A549 (cell line): ENCODE measurements at regions of chr3 and their contacts with region 1.

Region 1: DNA sequence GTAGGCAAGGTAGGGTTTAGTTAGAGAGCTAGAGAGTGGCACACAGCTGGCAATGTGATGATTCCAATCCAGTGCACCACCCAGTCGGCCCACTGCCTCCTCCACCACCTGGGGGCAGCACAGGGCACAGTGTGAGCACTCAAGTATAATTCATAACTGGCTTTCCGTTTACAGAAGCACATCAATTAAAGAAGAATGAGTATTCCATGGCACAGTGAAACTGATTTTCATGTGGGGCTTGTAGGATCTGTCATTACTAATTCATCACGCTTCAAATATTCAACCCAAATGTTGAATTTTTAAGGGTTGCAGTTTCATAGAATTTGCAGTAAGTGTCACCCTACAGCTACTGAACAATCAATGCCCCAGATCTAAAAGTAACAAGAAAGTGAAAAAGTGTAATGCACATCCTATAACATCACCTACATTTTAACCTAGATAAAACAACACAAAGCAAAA is 149.9 kb downstream of the IGSF11 start:
- DNase-seq: peak; percentile 40 to 63
- ATAC-seq: peak; percentile 88 to 92
- H3K4me3 ChIP-seq: no peak overlapping the region
- H3K27ac ChIP-seq: no peak overlapping the region
- H3K4me1 ChIP-seq: peaks cover 4% of the 10 kb centered on the region; the same call in 1 of the 3 replicates
- CTCF ChIP-seq: peak; percentile 100
- EP300 ChIP-seq: no peak
- POLR2A ChIP-seq: no peak
- RAD21 ChIP-seq: peak; percentile 69 to 94

Region 2: DNA sequence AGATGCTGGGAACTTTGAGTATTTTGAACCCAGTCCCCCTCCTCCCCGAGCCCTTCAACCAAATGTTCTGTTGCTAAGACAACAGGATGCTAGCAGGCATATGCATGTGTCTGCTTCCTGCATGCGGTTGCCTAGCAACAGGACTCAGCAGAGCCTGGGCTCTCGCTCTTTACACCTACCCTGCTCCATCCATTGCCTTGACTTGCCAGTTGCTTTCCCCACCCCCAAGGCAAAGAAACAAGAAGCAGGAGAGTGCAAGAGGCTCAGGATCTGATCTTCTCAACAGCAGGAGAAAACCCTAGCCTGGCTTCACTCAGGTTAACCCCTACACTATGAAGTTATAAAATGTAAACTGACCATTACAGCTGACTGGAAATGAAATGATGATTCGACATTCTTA is 243.2 kb before region 1 on chr3:
- CTCF ChIA-PET with region 1: no interaction called
- POLR2A ChIA-PET with region 1: no interaction called
- DNase-seq: peak in 1 of 2 experiments; percentile 1
- ATAC-seq: no peak
- H3K4me3 ChIP-seq: no peak overlapping the region
- H3K27ac ChIP-seq: no peak overlapping the region
- H3K4me1 ChIP-seq: no peaks in the 10 kb centered on the region
- CTCF ChIP-seq: no peak
- EP300 ChIP-seq: no peak
- POLR2A ChIP-seq: no peak
- RAD21 ChIP-seq: no peak

Region 3: GRCh38 chr3:118907909-118908308 is 23.1 kb after region 1 on chr3:
- CTCF ChIA-PET with region 1: interaction called, 18 read pairs
- POLR2A ChIA-PET with region 1: no interaction called
- DNase-seq: no peak
- ATAC-seq: no peak
- H3K4me3 ChIP-seq: no peak overlapping the region
- H3K27ac ChIP-seq: no peak overlapping the region
- H3K4me1 ChIP-seq: peaks cover 9% of the 10 kb centered on the region; the same call in 2 of the 3 replicates
- CTCF ChIP-seq: no peak
- EP300 ChIP-seq: no peak
- POLR2A ChIP-seq: no peak
- RAD21 ChIP-seq: no peak

Region 4: GRCh38 chr3:119042164-119042563 is 157.4 kb after region 1 on chr3:
- CTCF ChIA-PET with region 1: interaction called, 207 read pairs
- POLR2A ChIA-PET with region 1: no interaction called
- DNase-seq: no peak
- ATAC-seq: no peak
- H3K4me3 ChIP-seq: no peak overlapping the region
- H3K27ac ChIP-seq: no peak overlapping the region
- H3K4me1 ChIP-seq: no peaks in the 10 kb centered on the region
- CTCF ChIP-seq: no peak
- EP300 ChIP-seq: no peak
- POLR2A ChIP-seq: no peak
- RAD21 ChIP-seq: no peak

Region 5: DNA sequence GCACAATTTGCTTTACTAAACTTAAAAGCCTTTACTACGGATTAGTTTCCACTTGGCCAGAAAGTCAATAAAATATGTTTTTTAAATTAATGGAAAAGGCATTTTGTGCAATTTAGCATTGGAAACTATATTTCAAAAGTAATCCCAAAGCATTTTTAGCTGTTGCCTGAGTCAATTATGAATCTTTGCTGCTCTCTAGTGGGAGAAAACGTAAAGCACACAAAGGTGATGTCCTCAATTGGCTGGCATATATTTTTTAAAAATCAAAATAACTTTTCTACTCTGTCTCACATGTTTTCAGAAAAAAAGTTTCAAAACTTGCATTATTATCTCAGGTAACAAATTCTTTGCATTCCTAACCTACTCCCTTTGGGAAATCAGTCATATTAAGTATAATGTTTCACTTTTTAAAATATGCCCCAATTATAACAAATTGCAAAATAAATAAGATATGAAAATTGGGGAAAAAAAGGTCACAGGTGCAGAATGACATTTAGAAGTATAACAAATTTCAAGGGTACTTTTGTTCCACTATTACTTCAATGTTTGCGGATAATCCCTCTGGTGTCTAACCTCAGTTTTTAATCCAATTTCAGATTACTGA is 213.9 kb after region 1 on chr3:
- CTCF ChIA-PET with region 1: interaction called, 321 read pairs
- POLR2A ChIA-PET with region 1: interaction called, 9 read pairs
- DNase-seq: peak; percentile 31 to 53
- ATAC-seq: peak in 1 of 2 experiments; percentile 75; a peak in 2 of 6 replicates
- H3K4me3 ChIP-seq: no peak overlapping the region
- H3K27ac ChIP-seq: no peak overlapping the region
- H3K4me1 ChIP-seq: 0 out of 3 replicates have a peak, but pooled peaks cover 11% of the 10 kb centered on the region
- CTCF ChIP-seq: peak; percentile 95
- EP300 ChIP-seq: no peak
- POLR2A ChIP-seq: no peak
- RAD21 ChIP-seq: peak; percentile 94 to 95

Region 6: GRCh38 chr3:119240591-119241434 is 356.0 kb after region 1 on chr3 and contains the start of gene B4GALT4:
- CTCF ChIA-PET with region 1: interaction called, 65 read pairs
- POLR2A ChIA-PET with region 1: interaction called, 6 read pairs
- DNase-seq: peak; percentile 67 to 90
- ATAC-seq: peak; percentile 94 to 95
- H3K4me3 ChIP-seq: peak within 1 kb of the TSS; percentile 80
- H3K27ac ChIP-seq: peak within 1 kb of the TSS; percentile 92 to 99
- H3K4me1 ChIP-seq: peaks cover 33% of the 10 kb centered on the region
- CTCF ChIP-seq: no peak
- EP300 ChIP-seq: no peak; a peak in 1 of 5 replicates
- POLR2A ChIP-seq: peak; percentile 80
- RAD21 ChIP-seq: peak in 1 of 2 experiments; percentile 10; a peak in 1 of 5 replicates
- polyA plus RNA-seq, gene B4GALT4: 134 and 193 TPM in 2 replicates

Region 7: DNA sequence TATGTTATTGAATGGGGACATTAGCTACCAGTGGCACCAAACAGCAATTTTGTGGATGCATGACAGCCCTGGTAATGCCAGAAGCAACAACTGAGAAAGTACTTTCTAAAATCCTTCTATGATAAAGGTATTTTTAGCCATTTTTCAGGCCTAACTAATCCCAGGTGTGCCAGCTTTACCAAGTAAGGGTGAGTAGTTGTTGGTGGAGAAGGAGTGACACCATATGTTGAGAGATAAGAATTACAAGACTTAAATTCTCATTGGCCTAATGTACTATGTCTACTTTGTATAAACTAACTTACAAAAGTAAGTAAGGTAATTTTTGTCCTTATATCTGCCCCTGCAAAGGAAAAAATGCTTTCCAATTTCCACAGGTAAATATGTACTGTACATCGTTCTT is 796.5 kb after region 1 on chr3:
- CTCF ChIA-PET with region 1: interaction called, 42 read pairs
- POLR2A ChIA-PET with region 1: no interaction called
- DNase-seq: peak; percentile 27 to 44
- ATAC-seq: peak; percentile 47 to 54; a peak in 2 of 6 replicates
- H3K4me3 ChIP-seq: no peak overlapping the region
- H3K27ac ChIP-seq: no peak overlapping the region
- H3K4me1 ChIP-seq: peaks cover 5% of the 10 kb centered on the region; the same call in 2 of the 3 replicates
- CTCF ChIP-seq: peak; percentile 70
- EP300 ChIP-seq: no peak
- POLR2A ChIP-seq: no peak
- RAD21 ChIP-seq: peak; percentile 84 to 87